Transverse colon (tissue), 4 donors: ENCODE measurements at regions of chr13 and their contacts with region 1.

Region 1: GRCh38 chr13:89738072-89738471 is 1609.4 kb upstream of the MIR17HG start:
- DNase-seq: no peak
- H3K4me3 ChIP-seq: no peak overlapping the region
- H3K27ac ChIP-seq: no peak overlapping the region
- H3K4me1 ChIP-seq: no peaks in the 10 kb centered on the region
- H3K27me3 ChIP-seq: no peaks in the 10 kb centered on the region
- CTCF ChIP-seq: no peak
- EP300 ChIP-seq: no peak
- POLR2A ChIP-seq: no peak

Region 2: DNA sequence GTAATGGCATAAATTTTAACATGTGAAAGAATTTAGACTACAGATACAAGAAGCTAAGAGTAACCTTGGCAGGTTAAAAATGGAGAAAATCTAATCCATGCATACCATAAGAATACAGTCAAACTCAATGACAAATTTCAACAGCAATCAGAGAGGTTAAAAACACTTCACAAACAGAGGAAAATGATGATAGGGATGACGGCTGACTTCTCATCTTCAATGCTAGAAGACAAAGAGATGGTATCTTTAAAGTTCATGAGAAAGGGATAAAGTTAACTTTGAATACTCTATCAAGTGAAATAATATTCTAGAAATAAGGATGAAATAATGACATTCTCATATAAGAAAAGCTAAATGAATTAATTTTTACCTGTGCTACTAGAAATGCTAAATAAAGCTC is 479.2 kb after region 1 on chr13:
- in situ Hi-C with region 1: no loop called
- intact Hi-C with region 1: no loop called
- DNase-seq: no peak
- H3K4me3 ChIP-seq: no peak overlapping the region
- H3K27ac ChIP-seq: no peak overlapping the region
- H3K4me1 ChIP-seq: no peaks in the 10 kb centered on the region
- H3K27me3 ChIP-seq: no peaks in the 10 kb centered on the region
- CTCF ChIP-seq: no peak
- EP300 ChIP-seq: no peak
- POLR2A ChIP-seq: no peak

Region 3: GRCh38 chr13:91001371-91001770 is 1263.3 kb after region 1 on chr13:
- in situ Hi-C with region 1: no loop called
- intact Hi-C with region 1: loop called (anchors 5 kb)
- DNase-seq: no peak
- H3K4me3 ChIP-seq: no peak overlapping the region
- H3K27ac ChIP-seq: no peak overlapping the region
- H3K4me1 ChIP-seq: no peaks in the 10 kb centered on the region
- H3K27me3 ChIP-seq: no peaks in the 10 kb centered on the region
- CTCF ChIP-seq: no peak
- EP300 ChIP-seq: no peak
- POLR2A ChIP-seq: no peak